HEK293 (cell line): ENCODE measurements at regions of chr16 and their contacts with region 1.

Region 1: DNA sequence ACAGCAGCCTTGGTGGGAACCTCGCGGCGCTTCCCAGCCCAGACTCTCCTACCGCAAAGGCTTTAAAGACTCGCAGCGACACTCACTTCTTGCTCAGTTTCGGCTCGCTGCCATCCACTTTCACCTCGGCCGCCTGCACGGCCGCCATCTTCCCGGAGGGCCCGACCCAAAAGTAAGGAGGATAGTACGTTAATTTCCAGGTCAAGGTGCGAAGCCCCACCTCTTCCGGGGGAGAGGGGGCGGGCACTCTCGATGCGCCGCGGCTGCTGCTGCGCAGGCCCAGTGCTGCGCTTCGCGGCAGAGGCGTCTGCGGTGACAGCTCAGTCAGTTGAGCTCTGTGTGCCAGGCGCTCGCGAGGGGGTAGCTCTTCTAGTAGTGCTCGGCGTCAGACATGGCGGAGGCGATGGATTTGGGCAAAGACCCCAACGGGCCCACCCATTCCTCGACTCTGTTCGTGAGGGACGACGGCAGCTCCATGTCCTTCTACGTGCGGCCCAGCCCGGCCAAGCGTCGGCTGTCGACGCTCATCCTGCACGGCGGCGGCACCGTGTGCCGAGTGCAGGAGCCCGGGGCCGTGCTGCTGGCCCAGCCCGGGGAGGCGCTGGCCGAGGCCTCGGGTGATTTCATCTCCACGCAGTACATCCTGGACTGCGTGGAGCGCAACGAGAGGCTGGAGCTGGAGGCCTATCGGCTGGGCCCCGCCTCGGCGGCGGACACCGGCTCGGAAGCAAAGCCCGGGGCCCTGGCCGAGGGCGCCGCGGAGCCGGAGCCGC is at the starts of genes KARS1 and TERF2IP:
- H3K4me3 ChIP-seq: peak within 1 kb of the TSS; percentile 88
- H3K27ac ChIP-seq: peak within 1 kb of the TSS; percentile 88
- H3K4me1 ChIP-seq: peaks cover 7% of the 10 kb centered on the region
- CTCF ChIP-seq: no peak

Region 2: GRCh38 chr16:75555707-75556430 is 91.8 kb before region 1 on chr16 and contains the start of gene TMEM231:
- CTCF ChIA-PET with region 1: no interaction called
- POLR2A ChIA-PET with region 1: interaction called, 10 read pairs
- H3K4me3 ChIP-seq: peak within 1 kb of the TSS; percentile 69
- H3K27ac ChIP-seq: peak within 1 kb of the TSS; percentile 64
- H3K4me1 ChIP-seq: no peaks in the 10 kb centered on the region
- CTCF ChIP-seq: peak; percentile 87

Region 3: DNA sequence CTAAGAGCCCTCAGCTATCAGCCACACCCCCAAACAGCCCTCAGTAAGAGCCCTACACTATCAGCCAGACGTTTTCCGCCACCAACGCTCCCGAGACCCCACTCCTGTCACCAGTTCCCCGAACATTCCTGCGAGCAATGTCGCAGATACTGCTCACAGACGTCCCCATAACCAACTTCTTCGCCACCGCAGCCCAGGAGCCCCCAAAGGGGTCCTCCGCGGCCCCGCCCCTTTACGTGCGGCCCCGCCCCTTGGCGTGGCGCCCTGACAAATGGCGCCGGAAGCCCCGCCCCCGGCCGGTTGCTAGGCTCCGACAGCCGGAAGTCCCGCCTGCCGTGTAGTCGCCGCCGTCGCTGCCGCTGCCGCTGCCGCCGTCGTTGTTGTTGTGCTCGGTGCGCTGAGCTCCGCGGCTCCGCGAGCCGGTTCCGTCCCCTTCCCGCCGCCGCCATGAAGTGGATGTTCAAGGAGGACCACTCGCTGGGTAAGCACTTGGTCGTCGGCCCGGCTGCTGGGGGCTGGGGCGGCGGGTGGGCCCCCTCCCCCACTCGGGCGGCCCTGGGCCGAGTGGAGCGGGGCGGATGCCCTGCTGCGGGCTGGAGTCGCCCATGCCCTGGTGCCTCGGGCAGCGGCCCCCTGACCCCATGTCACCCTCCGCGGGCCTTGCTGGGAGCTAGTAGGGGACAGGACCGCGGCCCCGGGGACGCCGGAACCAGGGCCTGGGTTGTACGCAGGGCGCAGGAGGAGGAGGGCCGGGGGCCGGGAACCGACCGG is 81.5 kb before region 1 on chr16 and contains the start of gene GABARAPL2:
- CTCF ChIA-PET with region 1: no interaction called
- POLR2A ChIA-PET with region 1: interaction called, 17 read pairs
- H3K4me3 ChIP-seq: peak within 1 kb of the TSS; percentile 88
- H3K27ac ChIP-seq: peak within 1 kb of the TSS; percentile 40; the same call in 1 of the 2 replicates
- H3K4me1 ChIP-seq: no peaks in the 10 kb centered on the region
- CTCF ChIP-seq: no peak

Region 4: GRCh38 chr16:75660321-75660720 is 12.6 kb after region 1 on chr16:
- CTCF ChIA-PET with region 1: interaction called, 3 read pairs
- POLR2A ChIA-PET with region 1: interaction called, 10 read pairs
- H3K4me3 ChIP-seq: no peak overlapping the region
- H3K27ac ChIP-seq: no peak overlapping the region
- H3K4me1 ChIP-seq: no peaks in the 10 kb centered on the region
- CTCF ChIP-seq: no peak